ENCODE measurements at regions of chr20 and their contacts with region 1.

Region 1: GRCh38 chr20:6184080-6184479 is 61.2 kb upstream of the FERMT1 start:
- DNase-seq: no peak
- ATAC-seq: peak in 1 of 2 experiments; percentile 75; a peak in 3 of 6 replicates
- H3K4me3 ChIP-seq: no peak overlapping the region
- H3K27ac ChIP-seq: no peak overlapping the region
- H3K4me1 ChIP-seq: no peaks in the 10 kb centered on the region
- CTCF ChIP-seq: no peak
- EP300 ChIP-seq: no peak
- POLR2A ChIP-seq: no peak
- RAD21 ChIP-seq: no peak

Region 2: DNA sequence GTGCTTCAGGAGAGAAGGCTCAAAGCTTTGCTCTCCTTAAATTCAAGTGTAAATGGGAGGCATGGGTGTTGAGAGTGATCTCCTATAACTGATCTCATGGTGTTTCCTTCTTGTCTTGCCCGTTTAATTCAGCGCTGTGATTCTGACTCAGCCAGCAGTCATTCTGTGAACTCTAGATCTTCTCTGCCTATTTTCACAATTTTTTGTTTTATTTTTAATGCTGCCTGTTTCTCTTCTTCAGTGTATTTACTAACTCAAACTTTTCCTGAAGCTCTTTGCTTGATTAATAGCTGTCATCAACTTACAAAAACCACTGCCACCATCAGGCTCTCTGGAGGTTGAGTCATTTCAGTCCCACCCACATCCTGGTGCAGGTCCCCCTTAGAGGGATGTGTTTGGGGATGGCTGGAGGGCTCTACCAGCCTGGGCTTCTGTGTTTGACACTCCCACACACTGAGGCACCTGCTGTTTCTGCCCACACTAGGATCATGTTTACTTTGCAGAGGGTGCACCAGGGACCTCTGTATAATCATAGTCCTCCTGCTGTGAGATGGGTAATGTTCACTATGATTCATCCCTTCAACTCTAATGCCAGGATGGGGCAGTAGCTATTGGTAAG is 339.9 kb before region 1 on chr20:
- CTCF ChIA-PET with region 1: no interaction called
- POLR2A ChIA-PET with region 1: no interaction called
- DNase-seq: peak; percentile 91 to 96
- ATAC-seq: peak; percentile 98
- H3K4me3 ChIP-seq: no peak overlapping the region
- H3K27ac ChIP-seq: peak overlapping the region; percentile 39 to 65; a peak in 5 of 6 replicates
- H3K4me1 ChIP-seq: peaks cover 45% of the 10 kb centered on the region
- CTCF ChIP-seq: no peak
- EP300 ChIP-seq: peak; percentile 68 to 79; a peak in 3 of 5 replicates
- POLR2A ChIP-seq: no peak
- RAD21 ChIP-seq: peak in 1 of 2 experiments; percentile 66; a peak in 3 of 5 replicates

Region 3: DNA sequence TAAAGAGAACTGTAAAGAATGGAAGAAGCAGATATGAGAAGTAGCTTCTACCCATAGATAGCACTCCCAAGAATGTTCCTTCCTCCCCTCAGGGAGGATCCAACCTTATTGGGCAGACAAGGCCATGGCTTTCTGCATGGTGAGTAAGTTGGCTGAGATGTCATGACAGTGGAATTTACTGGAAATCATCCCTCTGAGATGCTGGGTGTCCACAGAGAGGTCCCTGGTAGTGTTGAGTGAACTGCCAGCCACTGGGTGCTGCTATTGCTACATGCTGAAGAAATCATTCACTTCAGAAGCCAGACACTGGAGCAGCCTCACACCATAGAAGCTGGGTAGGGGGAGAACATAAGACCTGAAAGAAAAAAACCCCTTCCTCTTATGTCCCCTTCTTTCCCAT is 14.8 kb before region 1 on chr20:
- CTCF ChIA-PET with region 1: interaction called, 10 read pairs
- POLR2A ChIA-PET with region 1: no interaction called
- DNase-seq: no peak
- ATAC-seq: peak; percentile 47 to 66
- H3K4me3 ChIP-seq: no peak overlapping the region
- H3K27ac ChIP-seq: no peak overlapping the region
- H3K4me1 ChIP-seq: peaks cover 13% of the 10 kb centered on the region; the same call in 2 of the 3 replicates
- CTCF ChIP-seq: 0 out of 3 replicates have a peak, but pooled peaks have one; percentile 10
- EP300 ChIP-seq: no peak
- POLR2A ChIP-seq: no peak
- RAD21 ChIP-seq: peak in 1 of 2 experiments; percentile 35; a peak in 2 of 5 replicates

Measured in A549 (cell line).